GM10248 (cell line): ENCODE measurements at regions of chr11 and their contacts with region 1.

Region 1: DNA sequence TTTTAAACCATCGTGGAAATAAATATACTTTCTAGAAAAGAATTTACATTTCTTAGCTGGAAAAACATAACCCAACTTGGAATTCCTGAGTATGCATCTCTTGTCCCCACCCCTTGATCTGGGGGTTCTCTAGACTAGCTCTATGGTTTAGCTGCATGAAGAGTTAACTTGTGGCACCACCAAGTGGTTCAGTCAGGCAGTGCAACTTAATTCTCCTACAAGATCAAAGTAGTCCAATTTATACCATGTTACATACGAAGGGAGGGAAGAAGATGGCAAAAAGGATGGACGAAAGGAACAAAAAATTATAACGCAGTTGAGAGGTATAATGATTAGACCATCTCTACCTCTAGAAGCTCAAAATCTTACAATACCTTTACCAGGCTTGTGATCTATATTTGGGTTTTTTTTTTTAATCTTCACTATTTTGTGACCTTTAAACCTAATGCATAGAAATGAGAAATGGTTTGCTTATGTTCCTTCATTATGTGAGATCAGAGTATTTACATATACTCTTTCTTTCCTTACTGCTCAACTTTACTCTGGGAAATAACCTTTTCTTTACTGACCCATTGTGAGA is 28.5 kb upstream of the ALKBH3 start:
- DNase-seq: peak; percentile 67
- CTCF ChIP-seq: peak; percentile 75

Region 2: GRCh38 chr11:43579171-43579918 is 272.8 kb before region 1 on chr11:
- CTCF ChIA-PET with region 1: interaction called, 26 read pairs
- POLR2A ChIA-PET with region 1: no interaction called
- DNase-seq: peak; percentile 64
- CTCF ChIP-seq: peak; percentile 45

Region 3: GRCh38 chr11:43830928-43831440 is 21.2 kb before region 1 on chr11:
- CTCF ChIA-PET with region 1: interaction called, 39 read pairs
- POLR2A ChIA-PET with region 1: no interaction called
- DNase-seq: no peak
- CTCF ChIP-seq: no peak

Region 4: DNA sequence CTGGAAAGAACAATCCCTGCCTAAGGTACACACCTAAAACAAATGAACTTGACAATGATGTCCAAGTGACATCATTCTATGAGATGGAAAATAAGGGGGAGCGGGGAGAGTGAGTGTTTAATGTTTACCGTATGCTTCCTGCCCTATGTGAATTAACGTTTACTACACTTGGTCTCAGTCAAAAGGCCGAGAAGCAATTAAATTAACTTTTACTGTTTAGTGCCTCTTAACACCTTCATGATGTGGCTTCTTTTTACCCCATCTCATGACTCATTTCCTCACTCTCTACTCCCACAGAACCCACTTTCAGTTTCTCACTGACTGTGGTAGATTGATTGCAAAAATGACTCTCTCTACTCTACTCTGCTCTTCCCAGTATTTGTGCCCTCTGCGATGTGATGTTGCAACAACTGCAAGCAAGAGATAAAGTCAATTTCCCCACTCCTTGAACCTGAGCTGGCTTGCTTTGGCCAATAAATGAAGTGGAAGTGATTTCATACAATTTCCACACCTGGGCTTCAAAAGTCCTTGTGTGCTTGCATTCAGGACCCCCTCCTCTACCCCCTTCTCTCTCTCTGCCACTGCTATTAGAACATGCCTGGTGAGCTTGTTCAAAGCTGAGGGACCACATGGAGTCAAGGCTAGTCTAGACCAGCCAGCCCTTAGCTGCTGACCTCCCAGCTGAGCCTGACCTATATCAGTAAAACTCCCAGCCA is 16.9 kb after region 1 on chr11:
- CTCF ChIA-PET with region 1: interaction called, 15 read pairs
- POLR2A ChIA-PET with region 1: no interaction called
- DNase-seq: peak; percentile 80
- CTCF ChIP-seq: no peak